AG04449 (cell line): ENCODE measurements at regions of chr11 and their contacts with region 1.

Region 1: GRCh38 chr11:124865921-124866583 is 820 bp downstream of the ROBO3 start:
- DNase-seq: no peak
- H3K4me3 ChIP-seq: peak overlapping the region; percentile 38
- CTCF ChIP-seq: peak; percentile 86

Region 2: GRCh38 chr11:124442442-124442841 is 423.6 kb before region 1 on chr11:
- CTCF ChIA-PET with region 1: no interaction called
- POLR2A ChIA-PET with region 1: no interaction called
- DNase-seq: no peak
- H3K4me3 ChIP-seq: no peak overlapping the region
- CTCF ChIP-seq: no peak

Region 3: GRCh38 chr11:124656774-124657630 is 209.1 kb before region 1 on chr11:
- CTCF ChIA-PET with region 1: interaction called, 11 read pairs
- POLR2A ChIA-PET with region 1: no interaction called
- DNase-seq: no peak
- H3K4me3 ChIP-seq: no peak overlapping the region
- CTCF ChIP-seq: no peak

Region 4: DNA sequence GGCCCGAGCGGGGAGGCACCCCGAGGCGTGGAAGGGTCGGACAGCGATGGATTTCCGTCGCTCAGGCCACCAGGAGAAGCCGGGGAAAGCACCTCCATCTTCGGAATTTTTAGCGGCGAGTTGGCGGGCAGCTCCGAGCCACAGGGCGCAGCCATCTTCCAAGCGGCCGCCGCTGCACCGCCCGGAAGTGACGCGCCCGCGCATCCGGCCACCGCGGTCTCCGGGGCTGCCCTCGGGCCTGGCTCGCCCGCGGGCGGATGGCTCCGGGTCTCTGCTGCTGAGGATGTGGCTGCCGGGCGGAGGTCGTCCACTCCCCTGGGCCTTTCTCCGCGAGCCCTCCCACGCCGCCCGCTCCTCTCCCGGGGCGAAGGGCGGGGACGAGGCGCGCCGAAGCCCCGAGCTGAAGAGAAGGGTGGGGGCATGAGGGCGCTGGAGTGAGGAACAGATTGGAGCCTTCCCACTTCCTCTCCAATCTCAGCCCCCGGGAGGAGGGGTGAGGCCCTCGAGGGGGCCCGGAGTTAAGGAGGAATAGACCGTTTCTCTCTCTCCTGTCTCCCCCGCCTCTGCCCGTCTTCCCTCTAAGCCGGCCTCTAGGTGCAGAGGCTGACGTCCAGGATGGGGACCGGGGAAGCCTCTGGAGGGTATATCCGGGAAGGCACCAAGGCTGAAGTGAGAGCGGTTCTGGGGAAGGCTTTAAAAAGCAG is 65.7 kb before region 1 on chr11 and contains the start of gene MSANTD2:
- CTCF ChIA-PET with region 1: interaction called, 11 read pairs
- POLR2A ChIA-PET with region 1: no interaction called
- DNase-seq: peak; percentile 17
- H3K4me3 ChIP-seq: peak within 1 kb of the TSS; percentile 82
- CTCF ChIP-seq: no peak

Region 5: GRCh38 chr11:124823504-124824372 is 42.3 kb before region 1 on chr11:
- CTCF ChIA-PET with region 1: no interaction called
- POLR2A ChIA-PET with region 1: no interaction called
- DNase-seq: no peak
- H3K4me3 ChIP-seq: no peak overlapping the region
- CTCF ChIP-seq: no peak

Region 6: DNA sequence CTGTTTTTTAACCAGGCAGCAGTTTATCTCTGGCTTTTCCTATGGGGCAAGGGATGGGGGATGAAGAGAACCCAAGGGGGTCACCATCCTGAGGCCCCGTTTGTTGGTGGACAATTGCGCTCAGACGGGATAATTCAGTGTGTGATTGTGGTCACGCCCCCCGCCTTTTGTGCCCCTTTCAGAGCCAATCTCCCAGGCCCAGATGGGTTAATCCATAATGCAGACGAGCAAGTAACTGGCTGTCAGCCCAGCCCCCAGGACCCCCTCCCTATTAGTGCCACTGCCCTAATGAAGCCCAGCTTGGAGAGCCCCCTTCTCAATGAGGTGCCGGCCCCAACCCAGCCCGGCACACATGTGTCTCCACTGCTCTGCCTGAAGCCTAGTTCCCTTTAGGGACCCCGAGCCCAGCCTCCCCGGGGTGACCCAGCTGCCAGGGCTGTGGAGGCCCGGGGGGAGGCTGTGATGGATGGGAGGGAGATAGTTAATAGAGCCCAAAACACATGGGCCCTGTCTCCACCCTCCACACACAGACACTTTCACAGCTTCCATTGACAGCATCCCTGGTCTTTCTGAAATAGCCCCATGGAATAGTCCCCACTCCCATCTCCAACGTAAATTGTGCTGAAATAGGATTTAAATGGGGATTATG is 19.9 kb before region 1 on chr11:
- CTCF ChIA-PET with region 1: interaction called, 63 read pairs
- POLR2A ChIA-PET with region 1: no interaction called
- DNase-seq: no peak
- H3K4me3 ChIP-seq: no peak overlapping the region
- CTCF ChIP-seq: no peak

Region 7: GRCh38 chr11:124855437-124855836 is 10.6 kb before region 1 on chr11:
- CTCF ChIA-PET with region 1: interaction called, 63 read pairs
- POLR2A ChIA-PET with region 1: no interaction called
- DNase-seq: no peak
- H3K4me3 ChIP-seq: no peak overlapping the region
- CTCF ChIP-seq: no peak

Region 8: GRCh38 chr11:124882339-124883071 is 16.5 kb after region 1 on chr11:
- CTCF ChIA-PET with region 1: interaction called, 12 read pairs
- POLR2A ChIA-PET with region 1: no interaction called
- DNase-seq: no peak
- H3K4me3 ChIP-seq: no peak overlapping the region
- CTCF ChIP-seq: no peak

Region 9: GRCh38 chr11:124900464-124900863 is 34.4 kb after region 1 on chr11:
- CTCF ChIA-PET with region 1: interaction called, 15 read pairs
- POLR2A ChIA-PET with region 1: no interaction called
- DNase-seq: no peak
- H3K4me3 ChIP-seq: no peak overlapping the region; the same call in 1 of the 2 replicates
- CTCF ChIP-seq: no peak